Activated CD4-positive, alpha-beta T cell treated with anti-CD3 and anti-CD28 coated beads for 36 hours (primary cell): ENCODE measurements at regions of chr11 and their contacts with region 1.

Region 1: GRCh38 chr11:32326522-32326921 is 108.8 kb downstream of the WT1 start:
- DNase-seq: no peak
- ATAC-seq: no peak
- H3K4me3 Mint-ChIP-seq: no peak overlapping the region
- H3K27ac Mint-ChIP-seq: no peak overlapping the region
- H3K4me1 Mint-ChIP-seq: no peaks in the 10 kb centered on the region
- H3K27me3 Mint-ChIP-seq: peaks cover 10% of the 10 kb centered on the region

Region 2: DNA sequence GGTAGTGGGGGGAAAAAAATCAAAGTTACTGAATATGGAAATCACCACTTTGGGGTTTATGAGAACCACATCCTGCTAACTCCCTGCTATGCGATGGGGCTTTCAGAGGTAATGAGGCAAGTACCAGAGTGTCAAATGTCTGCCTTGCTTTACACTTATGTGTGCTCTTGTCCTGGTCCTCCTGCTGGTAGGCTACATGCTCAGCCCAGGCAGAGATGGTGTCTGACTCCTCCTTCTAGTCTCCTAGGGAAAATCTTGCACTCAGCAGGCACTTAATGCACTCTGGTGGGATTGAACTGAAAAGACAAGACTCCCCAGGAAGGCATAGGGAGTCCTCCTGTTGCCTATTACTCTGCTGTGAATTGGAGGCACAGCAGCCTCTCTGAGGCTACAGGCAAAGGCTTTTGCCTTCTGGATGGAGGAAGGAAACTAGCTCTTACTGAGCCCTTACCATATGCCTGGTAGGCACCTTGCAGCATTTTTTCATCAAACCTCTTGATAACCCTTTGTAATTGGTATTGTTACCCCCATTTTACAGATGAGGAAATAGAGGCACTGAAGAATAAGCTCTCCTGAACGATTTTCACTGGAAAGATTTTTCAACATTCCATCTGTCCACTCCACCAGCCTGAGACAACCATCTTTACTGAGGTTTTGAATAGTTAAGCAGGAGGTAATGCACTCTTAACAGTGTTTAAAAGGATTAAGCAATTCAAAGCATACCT is 383.3 kb before region 1 on chr11:
- CTCF ChIA-PET with region 1: no interaction called
- POLR2A ChIA-PET with region 1: no interaction called
- intact Hi-C with region 1: no loop called
- DNase-seq: no peak
- ATAC-seq: no peak
- H3K4me3 Mint-ChIP-seq: no peak overlapping the region
- H3K27ac Mint-ChIP-seq: no peak overlapping the region
- H3K4me1 Mint-ChIP-seq: no peaks in the 10 kb centered on the region
- H3K27me3 Mint-ChIP-seq: peaks cover 10% of the 10 kb centered on the region

Region 3: GRCh38 chr11:32302821-32303220 is 23.7 kb before region 1 on chr11:
- CTCF ChIA-PET with region 1: interaction called, 13 read pairs
- POLR2A ChIA-PET with region 1: no interaction called
- intact Hi-C with region 1: no loop called
- DNase-seq: no peak
- ATAC-seq: no peak
- H3K4me3 Mint-ChIP-seq: no peak overlapping the region
- H3K27ac Mint-ChIP-seq: no peak overlapping the region
- H3K4me1 Mint-ChIP-seq: no peaks in the 10 kb centered on the region
- H3K27me3 Mint-ChIP-seq: no peaks in the 10 kb centered on the region

Region 4: GRCh38 chr11:32500001-32500400 is 173.5 kb after region 1 on chr11:
- CTCF ChIA-PET with region 1: no interaction called
- POLR2A ChIA-PET with region 1: no interaction called
- intact Hi-C with region 1: no loop called
- DNase-seq: no peak
- ATAC-seq: no peak
- H3K4me3 Mint-ChIP-seq: no peak overlapping the region
- H3K27ac Mint-ChIP-seq: no peak overlapping the region
- H3K4me1 Mint-ChIP-seq: no peaks in the 10 kb centered on the region
- H3K27me3 Mint-ChIP-seq: no peaks in the 10 kb centered on the region

Region 5: GRCh38 chr11:32615422-32615821 is 288.9 kb after region 1 on chr11:
- CTCF ChIA-PET with region 1: no interaction called
- POLR2A ChIA-PET with region 1: no interaction called
- intact Hi-C with region 1: loop called in 1 of 2 experiments (anchors 1 kb)
- DNase-seq: no peak
- ATAC-seq: no peak
- H3K4me3 Mint-ChIP-seq: no peak overlapping the region
- H3K27ac Mint-ChIP-seq: no peak overlapping the region
- H3K4me1 Mint-ChIP-seq: no peaks in the 10 kb centered on the region
- H3K27me3 Mint-ChIP-seq: peaks cover 2% of the 10 kb centered on the region